ENCODE measurements at regions of chr11 and their contacts with region 1.

Region 1: GRCh38 chr11:43282607-43283440 is 29.0 kb upstream of the API5 start:
- DNase-seq: peak; percentile 49
- H3K4me3 Mint-ChIP-seq: no peak overlapping the region
- H3K27ac Mint-ChIP-seq: no peak overlapping the region
- H3K4me1 Mint-ChIP-seq: no peaks in the 10 kb centered on the region
- H3K27me3 Mint-ChIP-seq: peaks cover 21% of the 10 kb centered on the region

Region 2: DNA sequence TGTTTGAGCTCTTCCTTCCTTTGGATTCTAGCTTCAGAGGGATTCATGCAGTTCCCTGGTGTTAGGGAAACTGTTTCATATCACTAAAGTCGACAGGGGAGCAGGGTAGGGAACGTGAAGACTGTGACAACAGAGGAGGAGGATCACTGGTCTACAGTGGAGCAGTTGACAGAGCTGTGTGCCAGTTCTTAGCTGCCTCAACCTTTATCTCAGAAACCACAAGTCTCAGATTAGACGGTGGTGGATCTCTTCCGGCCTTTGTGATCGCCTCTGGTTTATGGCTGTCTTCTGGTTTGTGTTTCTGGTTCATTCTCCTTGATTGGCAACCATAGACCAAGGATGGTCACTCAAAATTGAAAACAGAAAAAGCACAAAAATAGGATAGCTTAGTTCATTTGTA is 509.9 kb before region 1 on chr11:
- CTCF ChIA-PET with region 1: interaction called, 4 read pairs
- POLR2A ChIA-PET with region 1: no interaction called
- intact Hi-C with region 1: loop called (anchors 2 kb)
- DNase-seq: no peak
- H3K4me3 Mint-ChIP-seq: no peak overlapping the region
- H3K27ac Mint-ChIP-seq: no peak overlapping the region
- H3K4me1 Mint-ChIP-seq: no peaks in the 10 kb centered on the region
- H3K27me3 Mint-ChIP-seq: no peaks in the 10 kb centered on the region